Activated CD4-positive, alpha-beta T cell treated with anti-CD3 and anti-CD28 coated beads for 36 hours (primary cell): ENCODE measurements at regions of chr15 and their contacts with region 1.

Region 1: DNA sequence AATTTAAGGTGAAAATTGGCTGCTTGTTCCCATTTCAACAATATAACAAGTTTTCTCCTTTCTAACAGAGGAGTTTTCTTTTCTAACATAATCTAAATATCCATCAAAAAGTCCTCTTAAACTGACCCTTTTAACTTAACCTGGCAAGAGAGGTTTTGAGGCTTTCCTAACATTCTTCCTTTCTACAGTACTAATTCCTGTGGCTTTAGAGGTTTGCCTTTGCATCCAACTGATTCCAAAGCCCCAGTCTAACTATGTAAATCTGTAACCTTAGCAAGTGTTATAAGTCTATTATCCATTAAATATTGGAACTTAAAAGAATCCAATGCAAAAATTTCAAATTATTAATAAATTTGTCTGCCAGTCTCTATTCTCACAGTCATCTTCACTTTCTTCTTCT is 134.1 kb downstream of the ISL2 start:
- DNase-seq: no peak
- ATAC-seq: no peak
- H3K4me3 Mint-ChIP-seq: no peak overlapping the region
- H3K27ac Mint-ChIP-seq: no peak overlapping the region
- H3K4me1 Mint-ChIP-seq: no peaks in the 10 kb centered on the region
- H3K27me3 Mint-ChIP-seq: no peaks in the 10 kb centered on the region

Region 2: DNA sequence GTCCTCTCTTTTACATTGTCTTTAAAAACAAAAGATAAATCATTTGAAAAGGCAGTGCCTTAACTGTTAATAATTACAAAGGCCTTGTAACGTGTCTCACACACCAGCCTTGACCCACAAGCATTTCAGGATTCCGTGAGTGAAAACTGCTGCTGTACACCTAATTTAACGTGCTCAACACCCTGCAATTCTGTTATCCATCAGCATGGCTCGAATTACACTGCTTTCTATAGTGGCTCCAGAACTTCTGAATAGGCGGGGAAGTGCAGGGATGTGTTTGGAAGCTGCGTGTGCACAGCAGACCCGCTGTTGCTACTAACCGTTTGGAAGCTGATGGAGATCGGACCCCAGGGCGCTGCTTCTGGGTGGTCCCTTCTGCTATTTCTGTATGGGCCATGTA is 149.5 kb before region 1 on chr15:
- CTCF ChIA-PET with region 1: no interaction called
- POLR2A ChIA-PET with region 1: no interaction called
- intact Hi-C with region 1: no loop called
- DNase-seq: no peak
- ATAC-seq: no peak
- H3K4me3 Mint-ChIP-seq: no peak overlapping the region
- H3K27ac Mint-ChIP-seq: no peak overlapping the region
- H3K4me1 Mint-ChIP-seq: no peaks in the 10 kb centered on the region
- H3K27me3 Mint-ChIP-seq: peaks cover 20% of the 10 kb centered on the region

Region 3: DNA sequence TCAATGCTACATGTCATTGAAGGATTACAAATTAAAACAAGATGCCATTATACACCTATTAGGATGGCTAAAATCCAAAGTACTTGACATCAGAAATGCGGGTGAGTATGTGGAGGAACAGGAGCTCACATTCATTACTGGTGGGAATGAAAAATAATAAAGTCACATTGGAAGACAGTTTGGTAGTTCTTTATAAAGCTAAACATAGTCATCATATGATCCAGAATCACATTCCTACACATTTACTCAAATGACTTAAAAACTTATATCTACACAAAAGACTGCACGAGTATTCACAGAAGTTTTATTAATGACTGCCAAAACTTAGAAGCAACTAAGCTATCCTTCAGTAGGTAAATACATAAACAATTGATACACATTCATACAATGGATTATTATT is 13.1 kb after region 1 on chr15:
- CTCF ChIA-PET with region 1: no interaction called
- POLR2A ChIA-PET with region 1: no interaction called
- intact Hi-C with region 1: no loop called
- DNase-seq: no peak
- ATAC-seq: no peak
- H3K4me3 Mint-ChIP-seq: no peak overlapping the region
- H3K27ac Mint-ChIP-seq: no peak overlapping the region
- H3K4me1 Mint-ChIP-seq: no peaks in the 10 kb centered on the region
- H3K27me3 Mint-ChIP-seq: no peaks in the 10 kb centered on the region

Region 4: DNA sequence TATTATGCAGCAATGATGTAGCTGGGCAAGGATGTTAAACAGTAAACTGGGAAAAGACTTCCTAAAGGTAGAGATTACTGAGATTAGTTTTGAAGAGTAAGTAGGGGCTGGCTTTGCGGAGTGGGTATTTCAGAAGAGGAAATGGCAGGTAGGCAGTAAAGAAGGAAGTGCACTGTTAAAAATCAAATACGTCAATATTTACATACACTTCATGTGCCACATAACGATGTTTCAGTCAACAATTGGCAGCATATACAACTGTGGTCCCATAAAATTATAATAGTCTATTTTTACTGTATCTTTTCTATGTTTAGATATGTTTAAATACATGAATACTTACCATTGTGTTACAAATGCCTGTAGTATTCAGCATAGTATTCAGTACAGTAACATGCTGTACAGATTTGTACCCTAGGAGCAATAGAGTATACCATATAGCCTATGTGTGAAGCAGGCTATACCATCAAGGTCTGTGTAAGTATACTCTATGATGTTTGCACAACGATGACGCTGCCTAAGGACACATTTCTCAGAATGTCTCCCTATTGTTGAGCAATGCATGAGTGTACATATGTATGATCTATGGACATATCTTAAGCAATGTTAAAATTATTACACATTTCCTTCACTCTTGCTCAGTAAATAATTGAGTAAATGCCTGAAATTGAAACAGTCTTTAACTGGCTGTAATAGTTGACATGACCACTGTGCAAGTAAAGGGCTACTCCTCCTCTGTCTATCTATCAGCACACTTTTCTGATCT is 62.5 kb after region 1 on chr15:
- CTCF ChIA-PET with region 1: no interaction called
- POLR2A ChIA-PET with region 1: no interaction called
- intact Hi-C with region 1: loop called in 1 of 2 experiments (anchors 10 kb)
- DNase-seq: no peak
- ATAC-seq: no peak
- H3K4me3 Mint-ChIP-seq: no peak overlapping the region
- H3K27ac Mint-ChIP-seq: no peak overlapping the region
- H3K4me1 Mint-ChIP-seq: no peaks in the 10 kb centered on the region
- H3K27me3 Mint-ChIP-seq: no peaks in the 10 kb centered on the region

Region 5: GRCh38 chr15:76799760-76800159 is 329.1 kb after region 1 on chr15:
- CTCF ChIA-PET with region 1: no interaction called
- POLR2A ChIA-PET with region 1: no interaction called
- intact Hi-C with region 1: no loop called
- DNase-seq: no peak
- ATAC-seq: no peak
- H3K4me3 Mint-ChIP-seq: no peak overlapping the region
- H3K27ac Mint-ChIP-seq: no peak overlapping the region
- H3K4me1 Mint-ChIP-seq: no peaks in the 10 kb centered on the region
- H3K27me3 Mint-ChIP-seq: no peaks in the 10 kb centered on the region